Dendritic cell treated with granulocyte-macrophage colony-stimulating factor and Interleukin-4, amounts not matched to agents 40 ng/mL and 50 ng/mL, for 4 days (primary cell): ENCODE measurements at regions of chr4 and their contacts with region 1.

Region 1: DNA sequence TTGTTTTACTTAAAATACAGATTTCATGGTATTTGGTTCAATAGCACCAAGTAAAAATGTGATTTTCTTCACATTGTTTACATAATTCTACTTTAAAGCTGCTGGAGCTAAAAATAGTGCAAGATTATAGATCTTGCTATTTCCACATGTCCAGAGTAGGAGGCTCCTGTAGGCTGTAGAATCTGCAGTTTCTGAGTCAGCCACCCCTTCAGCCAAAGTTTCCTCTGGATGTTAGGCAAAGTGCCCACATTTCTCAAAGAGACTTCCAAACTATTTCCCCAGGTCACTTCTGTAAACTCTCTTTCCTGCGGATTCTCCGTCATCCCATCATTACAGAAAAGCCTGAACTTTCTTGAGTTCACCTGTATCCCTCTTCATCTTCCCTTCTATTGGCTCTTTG is 342.5 kb upstream of the FSTL5 start:
- H3K4me3 Mint-ChIP-seq: no peak overlapping the region
- H3K27ac Mint-ChIP-seq: no peak overlapping the region
- H3K4me1 Mint-ChIP-seq: no peaks in the 10 kb centered on the region
- H3K27me3 Mint-ChIP-seq: no peaks in the 10 kb centered on the region

Region 2: GRCh38 chr4:164012396-164013027 is 1506.3 kb after region 1 on chr4:
- intact Hi-C with region 1: loop called (anchors 10 kb)
- H3K4me3 Mint-ChIP-seq: no peak overlapping the region
- H3K27ac Mint-ChIP-seq: no peak overlapping the region
- H3K4me1 Mint-ChIP-seq: no peaks in the 10 kb centered on the region
- H3K27me3 Mint-ChIP-seq: no peaks in the 10 kb centered on the region